Left ventricle myocardium superior (tissue), 1 donor: ENCODE measurements at regions of chr1 and their contacts with region 1.

Region 1: GRCh38 chr1:100866041-100866900 is 28.4 kb downstream of the EXTL2 start:
- DNase-seq: no peak
- ATAC-seq: peak; percentile 58

Region 2: GRCh38 chr1:100459358-100460114 is 406.7 kb before region 1 on chr1:
- intact Hi-C with region 1: loop called (anchors 5 kb)
- DNase-seq: peak; percentile 77
- ATAC-seq: peak; percentile 86

Region 3: DNA sequence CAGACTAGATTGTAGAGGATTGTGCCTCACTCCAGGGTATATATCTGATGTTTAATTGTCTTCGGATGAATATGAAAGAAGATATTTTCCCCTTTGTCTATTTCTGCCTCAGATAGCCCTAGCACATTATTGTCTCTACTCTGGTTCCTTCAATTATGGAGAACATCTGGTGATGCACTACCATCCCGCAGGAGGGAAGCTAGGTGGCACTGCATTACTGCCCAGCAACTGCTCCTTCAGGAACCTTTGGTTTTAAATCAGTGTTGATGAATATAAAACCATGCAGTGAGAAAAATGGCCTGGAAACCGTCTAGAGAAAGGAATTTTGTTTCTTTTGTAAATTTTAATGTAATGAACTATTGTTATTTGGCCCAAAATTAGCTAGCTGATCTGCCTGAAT is 259.8 kb before region 1 on chr1:
- intact Hi-C with region 1: loop called (anchors 2 kb)
- DNase-seq: peak; percentile 45
- ATAC-seq: peak; percentile 70